HCT116 (cell line): ENCODE measurements at regions of chr3 and their contacts with region 1.

Region 1: GRCh38 chr3:46078712-46079400 is 51.6 kb upstream of the XCR1 start:
- DNase-seq: peak; percentile 91
- ATAC-seq: peak; percentile 99
- H3K4me3 ChIP-seq: peak overlapping the region in 1 of 2 experiments; percentile 25; a peak in 2 of 4 replicates
- H3K27ac ChIP-seq: no peak overlapping the region
- H3K4me1 ChIP-seq: peaks cover 0 to 19% of the 10 kb centered on the region in 2 experiments; a peak in 1 of 4 replicates
- H3K27me3 ChIP-seq: no peaks in the 10 kb centered on the region
- CTCF ChIP-seq: peak; percentile 95 to 100 (median 100)
- POLR2A ChIP-seq: no peak
- RAD21 ChIP-seq: peak; percentile 99

Region 2: DNA sequence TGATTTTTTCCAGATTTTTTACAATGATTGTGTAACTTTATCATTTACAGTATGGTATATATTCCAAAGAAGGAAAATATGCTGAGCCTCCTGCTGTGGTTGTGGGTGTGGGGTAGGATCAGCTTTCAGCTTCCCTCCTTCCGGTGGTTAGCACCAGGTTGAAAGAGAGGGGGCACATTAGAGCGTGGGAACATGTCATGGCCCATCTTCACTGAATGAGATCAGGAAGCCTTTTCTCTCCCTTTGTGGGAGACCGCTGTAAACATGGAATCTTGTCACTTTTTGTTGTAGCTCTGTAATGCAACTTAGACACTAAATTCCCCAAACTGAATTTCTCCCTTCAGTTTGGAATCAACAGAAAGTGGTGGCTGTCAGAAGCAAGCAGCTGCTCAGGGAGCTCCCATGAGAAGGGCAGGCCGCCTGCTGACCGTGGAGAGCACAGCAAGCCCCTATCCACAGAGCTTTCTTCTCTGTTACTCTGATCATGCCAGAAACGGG is 571.0 kb before region 1 on chr3:
- CTCF ChIA-PET with region 1: interaction called, 3 read pairs
- POLR2A ChIA-PET with region 1: no interaction called
- RAD21 ChIA-PET with region 1: no interaction called
- intact Hi-C with region 1: loop called (anchors 5 kb)
- DNase-seq: no peak
- ATAC-seq: 0 out of 2 replicates have a peak, but pooled peaks have one; percentile 56
- H3K4me3 ChIP-seq: no peak overlapping the region
- H3K27ac ChIP-seq: peak overlapping the region; percentile 42; the same call in 1 of the 2 replicates
- H3K4me1 ChIP-seq: peaks cover 24 to 33% of the 10 kb centered on the region in 2 experiments
- H3K27me3 ChIP-seq: no peaks in the 10 kb centered on the region
- CTCF ChIP-seq: no peak; a peak in 1 of 6 replicates
- POLR2A ChIP-seq: no peak
- RAD21 ChIP-seq: no peak

Region 3: DNA sequence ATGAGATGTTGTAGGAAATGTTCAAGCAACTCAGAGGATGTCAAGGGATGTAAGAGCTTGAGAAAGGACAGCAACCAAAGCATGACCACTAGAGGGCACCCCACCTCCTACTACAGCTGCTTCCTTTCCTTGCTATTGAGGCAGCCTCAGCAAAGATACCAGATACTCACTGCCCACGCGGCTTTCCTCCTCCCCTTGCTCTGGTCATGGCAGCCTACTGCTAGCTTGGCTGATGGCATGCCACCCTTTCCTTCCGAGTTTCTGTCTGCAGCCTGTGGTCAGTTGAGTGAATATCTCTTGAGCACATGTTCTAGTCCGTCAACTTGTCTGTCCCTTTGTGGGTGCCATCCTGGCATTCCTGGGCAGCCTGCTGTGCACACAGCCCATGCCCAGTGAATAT is 140.0 kb before region 1 on chr3:
- CTCF ChIA-PET with region 1: interaction called, 38 read pairs
- POLR2A ChIA-PET with region 1: no interaction called
- RAD21 ChIA-PET with region 1: interaction called, 5 read pairs
- intact Hi-C with region 1: loop called (anchors 1 kb)
- DNase-seq: peak; percentile 69
- ATAC-seq: peak; percentile 92
- H3K4me3 ChIP-seq: no peak overlapping the region
- H3K27ac ChIP-seq: no peak overlapping the region
- H3K4me1 ChIP-seq: peaks cover 0 to 6% of the 10 kb centered on the region in 2 experiments; a peak in 1 of 4 replicates
- H3K27me3 ChIP-seq: no peaks in the 10 kb centered on the region
- CTCF ChIP-seq: peak; percentile 84 to 92 (median 91)
- POLR2A ChIP-seq: no peak
- RAD21 ChIP-seq: peak; percentile 82

Region 4: GRCh38 chr3:46208167-46208704 is 129.4 kb after region 1 on chr3 and contains the start of gene CCR1:
- CTCF ChIA-PET with region 1: interaction called, 10 read pairs
- POLR2A ChIA-PET with region 1: no interaction called
- RAD21 ChIA-PET with region 1: no interaction called
- intact Hi-C with region 1: no loop called
- DNase-seq: peak; percentile 45
- ATAC-seq: peak; percentile 91
- H3K4me3 ChIP-seq: no peak within 1 kb of the TSS
- H3K27ac ChIP-seq: no peak within 1 kb of the TSS
- H3K4me1 ChIP-seq: peaks cover 0 to 9% of the 10 kb centered on the region in 2 experiments; a peak in 2 of 4 replicates
- H3K27me3 ChIP-seq: 0 out of 2 replicates have a peak, but pooled peaks cover 3% of the 10 kb centered on the region
- CTCF ChIP-seq: peak; percentile 75 to 91 (median 83)
- POLR2A ChIP-seq: no peak
- RAD21 ChIP-seq: peak; percentile 88
- total RNA-seq, gene CCR1: 0.10 TPM

Region 5: GRCh38 chr3:46378426-46378942 is 299.6 kb after region 1 on chr3:
- CTCF ChIA-PET with region 1: interaction called, 16 read pairs
- POLR2A ChIA-PET with region 1: no interaction called
- RAD21 ChIA-PET with region 1: interaction called in 1 of 2 experiments, 3 read pairs
- intact Hi-C with region 1: loop called (anchors 5 kb)
- DNase-seq: peak; percentile 48
- ATAC-seq: peak; percentile 97
- H3K4me3 ChIP-seq: no peak overlapping the region
- H3K27ac ChIP-seq: no peak overlapping the region
- H3K4me1 ChIP-seq: peaks cover 0 to 3% of the 10 kb centered on the region in 2 experiments; a peak in 1 of 4 replicates
- H3K27me3 ChIP-seq: peaks cover 27% of the 10 kb centered on the region
- CTCF ChIP-seq: peak; percentile 66 to 92 (median 87)
- POLR2A ChIP-seq: no peak
- RAD21 ChIP-seq: peak; percentile 85